Posterior cingulate gyrus (tissue), 11 donors: ENCODE measurements at regions of chr3 and their contacts with region 1.

Region 1: DNA sequence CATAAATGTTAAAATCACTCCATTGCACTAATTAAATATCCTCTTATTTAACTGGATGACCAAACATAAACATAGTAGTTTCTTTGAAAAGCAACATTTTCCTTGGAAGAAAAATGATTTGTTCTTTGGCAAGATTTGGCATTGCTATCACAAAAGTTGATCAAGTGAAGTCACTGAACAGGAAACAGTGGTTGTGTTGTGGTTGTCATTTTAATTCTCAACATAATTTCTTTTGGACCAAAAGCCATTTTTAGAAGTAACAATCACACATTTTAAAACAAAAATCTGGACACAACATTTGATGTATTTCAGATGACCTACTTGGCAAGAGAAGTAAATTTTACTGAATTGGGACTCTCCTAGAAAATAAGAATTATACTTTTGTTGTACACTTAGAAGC is 872.3 kb downstream of the ROBO1 start:
- DNase-seq: no peak

Region 2: DNA sequence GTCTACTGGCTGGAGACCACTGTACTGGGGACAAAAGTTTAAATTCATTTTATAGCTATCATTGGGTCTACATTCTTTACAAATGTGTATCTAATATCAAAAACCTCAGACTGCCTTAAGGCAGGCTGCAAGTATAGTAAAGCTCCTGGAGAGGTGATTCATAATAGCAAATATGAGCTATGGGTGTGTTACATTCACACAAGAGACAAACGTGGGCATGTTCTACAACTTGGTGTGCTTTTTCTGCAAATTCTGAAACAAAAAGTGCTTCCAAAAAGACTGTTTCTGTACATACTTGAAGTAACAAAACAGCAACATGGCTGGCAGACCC is 229.1 kb before region 1 on chr3:
- intact Hi-C with region 1: loop called (anchors 10 kb)
- DNase-seq: no peak

Region 3: GRCh38 chr3:78741066-78741645 is 154.4 kb before region 1 on chr3:
- intact Hi-C with region 1: no loop called
- DNase-seq: no peak